ENCODE measurements at regions of chr5 and their contacts with region 1.

Region 1: GRCh38 chr5:43049236-43049635 is 9.1 kb upstream of the ANXA2R start:
- DNase-seq: no peak
- ATAC-seq: no peak
- H3K4me3 ChIP-seq: no peak overlapping the region
- H3K27ac ChIP-seq: no peak overlapping the region
- H3K4me1 ChIP-seq: peaks cover 46% of the 10 kb centered on the region
- H3K27me3 ChIP-seq: no peaks in the 10 kb centered on the region
- CTCF ChIP-seq: no peak

Region 2: GRCh38 chr5:43523662-43524072 is 474.4 kb after region 1 on chr5:
- CTCF ChIA-PET with region 1: interaction called, 12 read pairs
- POLR2A ChIA-PET with region 1: no interaction called
- intact Hi-C with region 1: no loop called
- DNase-seq: no peak
- ATAC-seq: no peak
- H3K4me3 ChIP-seq: no peak overlapping the region
- H3K27ac ChIP-seq: no peak overlapping the region
- H3K4me1 ChIP-seq: no peaks in the 10 kb centered on the region
- H3K27me3 ChIP-seq: no peaks in the 10 kb centered on the region
- CTCF ChIP-seq: no peak